ENCODE measurements at regions of chr14 and their contacts with region 1.

Region 1: GRCh38 chr14:44803239-44803905 is 158.4 kb downstream of the KLHL28 start:
- DNase-seq: peak; percentile 84
- H3K4me3 ChIP-seq: no peak overlapping the region
- H3K27ac ChIP-seq: no peak overlapping the region
- H3K4me1 ChIP-seq: peaks cover 5% of the 10 kb centered on the region
- H3K27me3 ChIP-seq: no peaks in the 10 kb centered on the region
- CTCF ChIP-seq: peak; percentile 74

Region 2: DNA sequence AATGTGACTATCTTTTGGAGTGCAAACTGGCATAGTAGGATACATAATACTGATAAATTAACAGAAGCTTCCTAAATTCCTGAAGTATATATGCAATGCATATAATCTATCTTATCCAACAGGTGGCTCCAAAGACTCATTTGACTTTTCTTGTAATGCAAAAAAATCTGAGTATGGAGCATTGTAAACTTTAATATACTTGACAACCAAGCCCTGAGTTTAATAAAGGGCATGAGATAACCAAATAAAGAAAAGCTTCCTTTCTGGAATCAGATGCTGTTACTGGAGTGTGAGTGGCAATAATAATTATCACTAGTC is 1299.8 kb before region 1 on chr14:
- CTCF ChIA-PET with region 1: no interaction called
- POLR2A ChIA-PET with region 1: no interaction called
- intact Hi-C with region 1: loop called (anchors 10 kb)
- DNase-seq: peak; percentile 66
- H3K4me3 ChIP-seq: no peak overlapping the region
- H3K27ac ChIP-seq: no peak overlapping the region
- H3K4me1 ChIP-seq: peaks cover 8% of the 10 kb centered on the region
- H3K27me3 ChIP-seq: no peaks in the 10 kb centered on the region
- CTCF ChIP-seq: peak; percentile 58

Region 3: DNA sequence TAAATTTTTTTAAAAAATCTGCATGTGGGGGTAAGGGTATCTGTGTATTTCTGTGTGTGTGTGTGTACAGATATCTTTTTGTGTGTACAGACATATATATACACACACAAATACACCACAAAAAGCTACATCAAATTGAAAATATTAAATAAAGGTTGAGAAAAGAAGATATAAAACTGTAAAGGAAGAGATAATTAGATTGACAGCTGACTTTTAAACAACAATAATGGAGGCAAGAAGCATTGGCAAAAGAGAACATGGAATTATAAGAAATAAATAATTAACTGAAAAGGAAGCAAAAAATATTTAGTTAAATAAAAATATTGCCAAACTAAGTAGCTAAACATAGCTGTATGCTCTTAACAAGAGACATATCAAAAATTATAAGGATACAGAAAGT is 587.7 kb before region 1 on chr14:
- CTCF ChIA-PET with region 1: no interaction called
- POLR2A ChIA-PET with region 1: no interaction called
- intact Hi-C with region 1: loop called (anchors 5 kb)
- DNase-seq: no peak
- H3K4me3 ChIP-seq: no peak overlapping the region
- H3K27ac ChIP-seq: no peak overlapping the region
- H3K4me1 ChIP-seq: peaks cover 9% of the 10 kb centered on the region
- H3K27me3 ChIP-seq: no peaks in the 10 kb centered on the region
- CTCF ChIP-seq: no peak

Region 4: DNA sequence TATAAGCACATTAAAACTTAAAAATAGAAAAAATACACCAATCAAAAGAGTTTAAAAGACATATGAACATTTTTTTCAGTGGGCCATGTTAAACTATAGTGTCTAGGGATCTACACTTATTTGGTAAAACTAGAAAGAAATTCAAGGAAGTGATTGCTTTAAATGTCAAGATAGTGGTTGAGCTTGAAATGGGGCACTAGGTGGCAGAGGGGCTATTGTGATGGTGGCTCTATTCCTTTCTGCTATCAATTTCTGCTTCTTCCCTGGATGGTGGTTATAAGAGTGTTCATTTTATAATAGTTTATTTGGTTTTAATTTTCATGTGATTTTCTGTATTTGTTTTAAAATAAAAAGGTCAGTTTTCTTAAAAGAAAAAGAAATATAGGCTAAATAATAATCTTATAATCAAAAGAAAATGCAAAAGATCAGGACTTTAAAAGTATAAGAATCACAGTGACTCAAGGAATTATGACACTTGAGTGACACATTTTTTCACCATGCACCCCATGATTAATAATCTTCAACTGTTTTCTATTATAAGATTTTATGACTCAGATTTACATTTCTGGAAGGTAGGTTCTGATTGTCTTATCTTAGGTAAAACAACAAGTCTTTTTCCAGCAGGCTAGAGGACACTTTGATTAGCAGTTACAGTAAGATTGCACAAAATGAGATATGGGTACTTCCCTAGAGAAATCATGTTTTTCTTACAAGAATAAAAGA is 433.8 kb before region 1 on chr14:
- CTCF ChIA-PET with region 1: no interaction called
- POLR2A ChIA-PET with region 1: no interaction called
- intact Hi-C with region 1: loop called (anchors 10 kb)
- DNase-seq: peak; percentile 53
- H3K4me3 ChIP-seq: no peak overlapping the region
- H3K27ac ChIP-seq: peak overlapping the region; percentile 20
- H3K4me1 ChIP-seq: peaks cover 39% of the 10 kb centered on the region
- H3K27me3 ChIP-seq: no peaks in the 10 kb centered on the region
- CTCF ChIP-seq: peak; percentile 62